ENCODE measurements at regions of chr6 and their contacts with region 1.

Region 1: DNA sequence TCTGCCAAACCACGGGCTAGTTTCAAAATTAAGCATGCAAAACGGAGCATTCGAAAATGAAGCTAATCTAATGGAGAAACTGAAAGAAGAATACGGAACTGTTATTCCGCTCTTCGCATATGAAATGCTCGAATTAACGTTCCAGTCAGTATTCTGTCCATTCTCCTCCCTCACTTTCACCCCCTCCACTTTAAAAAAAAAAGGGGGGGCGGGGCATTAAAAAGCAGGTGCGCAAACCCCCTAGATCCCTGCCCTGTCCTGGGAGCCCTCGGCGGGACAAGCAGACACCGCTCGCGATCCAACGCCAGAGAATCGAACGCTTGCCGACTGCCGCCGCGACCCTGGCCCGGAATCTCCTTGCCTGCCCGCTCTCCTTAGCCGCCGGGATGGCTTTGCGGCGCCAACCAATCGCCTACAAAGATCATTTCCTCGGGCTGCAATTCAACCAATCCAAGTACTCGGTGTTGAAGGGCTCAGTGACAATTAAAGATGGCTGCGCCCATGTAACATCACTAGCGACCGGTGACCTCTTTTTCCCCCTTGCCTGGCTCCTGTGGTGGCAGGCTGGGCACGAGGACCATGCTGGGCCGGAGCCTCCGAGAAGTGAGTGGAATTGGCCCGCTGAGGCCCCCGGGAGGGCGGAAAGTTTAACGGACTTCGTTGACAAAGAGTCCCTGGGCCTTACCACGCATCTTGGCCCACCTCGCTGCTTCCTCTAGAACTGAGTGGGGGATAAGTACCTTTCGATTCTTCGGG is at the starts of genes QRSL1 and RTN4IP1:
- DNase-seq: peak; percentile 95
- H3K4me3 ChIP-seq: peak within 1 kb of the TSS; percentile 83
- H3K27ac ChIP-seq: peak within 1 kb of the TSS; percentile 98
- H3K4me1 ChIP-seq: peaks cover 54% of the 10 kb centered on the region
- CTCF ChIP-seq: no peak
- total RNA-seq, gene QRSL1: 63.9 and 65.7 TPM in 2 replicates
- total RNA-seq, gene RTN4IP1: 25.2 TPM in 2 replicates

Region 2: GRCh38 chr6:106397431-106397830 is 231.8 kb before region 1 on chr6:
- CTCF ChIA-PET with region 1: no interaction called
- POLR2A ChIA-PET with region 1: no interaction called
- intact Hi-C with region 1: no loop called
- DNase-seq: no peak
- H3K4me3 ChIP-seq: no peak overlapping the region
- H3K27ac ChIP-seq: no peak overlapping the region
- H3K4me1 ChIP-seq: no peaks in the 10 kb centered on the region
- CTCF ChIP-seq: no peak

Region 3: DNA sequence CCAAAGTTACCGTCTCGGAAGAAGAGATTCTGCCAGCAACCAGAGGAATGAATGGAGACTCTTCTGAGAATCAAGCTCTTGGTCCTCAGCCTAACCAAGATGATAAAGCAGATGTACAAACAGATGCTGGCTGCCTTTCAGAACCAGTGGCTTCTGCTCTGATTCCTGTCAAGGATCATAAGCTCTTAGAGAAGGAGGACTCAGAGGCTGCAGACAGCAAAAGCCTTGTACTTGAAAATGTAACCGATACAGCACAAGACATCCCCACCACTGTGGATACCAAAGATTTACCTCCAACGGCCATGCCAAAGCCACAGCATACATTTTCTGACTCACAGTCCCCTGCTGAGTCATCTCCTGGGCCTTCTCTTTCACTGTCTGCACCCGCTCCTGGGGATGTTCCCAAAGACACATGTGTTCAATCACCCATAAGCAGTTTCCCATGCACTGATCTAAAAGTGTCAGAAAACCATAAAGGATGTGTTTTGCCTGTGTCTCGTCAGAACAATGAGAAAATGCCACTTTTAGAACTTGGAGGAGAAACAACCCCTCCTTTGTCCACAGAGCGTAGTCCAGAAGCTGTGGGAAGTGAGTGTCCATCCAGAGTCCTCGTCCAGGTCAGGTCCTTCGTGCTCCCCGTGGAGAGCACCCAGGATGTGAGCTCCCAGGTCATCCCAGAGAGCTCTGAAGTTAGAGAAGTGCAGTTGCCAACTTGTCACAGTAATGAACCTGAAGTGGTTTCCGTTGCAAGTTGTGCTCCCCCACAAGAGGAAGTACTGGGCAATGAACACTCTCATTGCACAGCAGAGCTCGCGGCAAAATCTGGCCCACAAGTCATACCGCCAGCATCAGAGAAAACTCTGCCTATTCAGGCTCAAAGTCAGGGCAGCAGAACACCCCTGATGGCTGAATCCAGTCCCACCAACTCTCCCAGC is 109.6 kb before region 1 on chr6:
- CTCF ChIA-PET with region 1: no interaction called
- POLR2A ChIA-PET with region 1: interaction called, 11 read pairs
- intact Hi-C with region 1: no loop called
- DNase-seq: peak; percentile 90
- H3K4me3 ChIP-seq: peak overlapping the region; percentile 72
- H3K27ac ChIP-seq: peak overlapping the region; percentile 95
- H3K4me1 ChIP-seq: peaks cover 79% of the 10 kb centered on the region
- CTCF ChIP-seq: no peak

Region 4: DNA sequence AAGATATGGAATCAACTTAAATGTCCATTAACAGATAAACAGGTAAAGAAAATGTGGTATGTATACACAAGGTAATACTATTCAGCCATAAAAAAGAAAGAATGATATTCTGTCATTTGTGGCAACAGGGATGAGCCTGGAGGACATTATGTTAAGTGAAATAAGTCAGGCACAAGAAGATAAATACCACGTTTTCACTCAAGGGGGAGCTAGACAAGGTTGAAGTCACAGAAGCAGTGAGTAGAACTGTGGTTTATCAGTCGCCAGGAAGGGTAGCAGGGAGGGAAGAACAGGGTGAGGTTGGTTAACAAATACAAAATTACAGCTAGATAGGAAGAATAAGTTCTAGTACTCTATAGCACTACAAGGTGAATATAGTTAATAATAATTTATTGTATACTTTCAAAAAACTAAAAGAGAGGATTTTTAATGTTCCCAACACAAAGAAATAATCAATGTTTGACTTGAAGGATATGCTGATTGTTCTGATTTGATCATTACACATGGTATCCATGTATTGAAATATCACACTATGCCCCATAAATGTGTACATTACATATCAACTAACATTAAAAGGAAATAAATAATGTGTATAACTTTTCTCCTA is 21.1 kb before region 1 on chr6:
- CTCF ChIA-PET with region 1: no interaction called
- POLR2A ChIA-PET with region 1: interaction called, 295 read pairs
- intact Hi-C with region 1: loop called (anchors 2 kb)
- DNase-seq: peak; percentile 82
- H3K4me3 ChIP-seq: no peak overlapping the region
- H3K27ac ChIP-seq: no peak overlapping the region
- H3K4me1 ChIP-seq: peaks cover 51% of the 10 kb centered on the region
- CTCF ChIP-seq: peak; percentile 87

Region 5: GRCh38 chr6:106648651-106649308 is 19.5 kb after region 1 on chr6:
- CTCF ChIA-PET with region 1: interaction called, 4 read pairs
- POLR2A ChIA-PET with region 1: interaction called, 140 read pairs
- intact Hi-C with region 1: loop called (anchors 1 kb)
- DNase-seq: peak; percentile 91
- H3K4me3 ChIP-seq: peak overlapping the region; percentile 73
- H3K27ac ChIP-seq: peak overlapping the region; percentile 96
- H3K4me1 ChIP-seq: peaks cover 49% of the 10 kb centered on the region
- CTCF ChIP-seq: no peak

Region 6: GRCh38 chr6:106666290-106667021 is 37.2 kb after region 1 on chr6:
- CTCF ChIA-PET with region 1: no interaction called
- POLR2A ChIA-PET with region 1: interaction called, 11 read pairs
- intact Hi-C with region 1: no loop called
- DNase-seq: peak; percentile 93
- H3K4me3 ChIP-seq: peak overlapping the region; percentile 29
- H3K27ac ChIP-seq: peak overlapping the region; percentile 92
- H3K4me1 ChIP-seq: peaks cover 61% of the 10 kb centered on the region
- CTCF ChIP-seq: no peak

Region 7: GRCh38 chr6:106799008-106799894 is 170.0 kb after region 1 on chr6:
- CTCF ChIA-PET with region 1: no interaction called
- POLR2A ChIA-PET with region 1: no interaction called
- intact Hi-C with region 1: no loop called
- DNase-seq: no peak
- H3K4me3 ChIP-seq: no peak overlapping the region
- H3K27ac ChIP-seq: no peak overlapping the region
- H3K4me1 ChIP-seq: no peaks in the 10 kb centered on the region
- CTCF ChIP-seq: no peak